HCT116 (cell line): ENCODE measurements at regions of chr9 and their contacts with region 1.

Region 1: DNA sequence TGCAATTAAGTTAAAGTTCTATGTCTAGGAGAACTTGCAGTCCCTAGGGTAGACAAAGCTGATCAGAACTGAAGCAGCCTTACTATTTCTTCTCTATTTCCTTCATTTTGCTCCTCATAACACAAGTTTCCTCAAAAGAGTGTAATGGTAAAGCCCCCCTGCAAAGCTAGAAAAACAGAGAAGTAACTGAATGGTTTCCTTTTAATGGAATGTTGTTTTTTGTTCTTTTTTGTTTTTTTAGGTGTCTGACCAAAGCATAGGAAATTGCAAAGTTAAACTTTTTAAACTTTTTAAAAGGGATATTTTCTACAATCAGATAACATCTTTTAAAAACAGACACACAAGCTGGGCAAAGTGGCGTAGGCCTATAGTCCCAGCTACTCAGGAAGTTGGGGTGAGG is 145.7 kb downstream of the TLE1 start:
- DNase-seq: no peak
- ATAC-seq: no peak
- H3K4me3 ChIP-seq: no peak overlapping the region
- H3K27ac ChIP-seq: no peak overlapping the region
- H3K4me1 ChIP-seq: no peaks in the 10 kb centered on the region
- H3K27me3 ChIP-seq: no peaks in the 10 kb centered on the region
- CTCF ChIP-seq: no peak
- POLR2A ChIP-seq: no peak
- RAD21 ChIP-seq: no peak

Region 2: DNA sequence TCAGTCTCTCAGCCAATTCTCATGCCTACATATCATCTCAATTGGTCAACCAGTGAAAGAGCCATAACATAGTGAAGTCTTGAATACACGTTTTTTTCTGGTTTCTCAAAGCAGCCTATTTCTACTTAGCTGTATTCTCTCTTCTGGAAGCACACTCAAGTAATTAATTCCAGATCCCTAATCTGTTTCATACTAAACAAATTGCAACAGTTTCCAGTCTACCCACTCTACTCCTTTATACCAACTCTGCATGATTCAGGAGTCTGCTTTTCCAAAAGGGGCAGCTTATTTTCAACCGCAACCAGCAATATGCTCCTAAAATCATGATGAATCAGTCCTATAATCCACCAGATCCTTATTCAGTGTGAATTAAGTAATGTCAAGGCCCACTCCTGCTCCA is 66.0 kb before region 1 on chr9:
- CTCF ChIA-PET with region 1: no interaction called
- POLR2A ChIA-PET with region 1: no interaction called
- RAD21 ChIA-PET with region 1: no interaction called
- intact Hi-C with region 1: no loop called
- DNase-seq: no peak
- ATAC-seq: no peak
- H3K4me3 ChIP-seq: no peak overlapping the region
- H3K27ac ChIP-seq: no peak overlapping the region
- H3K4me1 ChIP-seq: no peaks in the 10 kb centered on the region
- H3K27me3 ChIP-seq: no peaks in the 10 kb centered on the region
- CTCF ChIP-seq: no peak
- POLR2A ChIP-seq: no peak
- RAD21 ChIP-seq: no peak

Region 3: GRCh38 chr9:81592887-81593266 is 49.2 kb after region 1 on chr9:
- CTCF ChIA-PET with region 1: no interaction called
- POLR2A ChIA-PET with region 1: no interaction called
- RAD21 ChIA-PET with region 1: no interaction called
- intact Hi-C with region 1: no loop called
- DNase-seq: no peak
- ATAC-seq: no peak
- H3K4me3 ChIP-seq: no peak overlapping the region
- H3K27ac ChIP-seq: no peak overlapping the region
- H3K4me1 ChIP-seq: no peaks in the 10 kb centered on the region
- H3K27me3 ChIP-seq: no peaks in the 10 kb centered on the region
- CTCF ChIP-seq: no peak
- POLR2A ChIP-seq: no peak
- RAD21 ChIP-seq: no peak

Region 4: DNA sequence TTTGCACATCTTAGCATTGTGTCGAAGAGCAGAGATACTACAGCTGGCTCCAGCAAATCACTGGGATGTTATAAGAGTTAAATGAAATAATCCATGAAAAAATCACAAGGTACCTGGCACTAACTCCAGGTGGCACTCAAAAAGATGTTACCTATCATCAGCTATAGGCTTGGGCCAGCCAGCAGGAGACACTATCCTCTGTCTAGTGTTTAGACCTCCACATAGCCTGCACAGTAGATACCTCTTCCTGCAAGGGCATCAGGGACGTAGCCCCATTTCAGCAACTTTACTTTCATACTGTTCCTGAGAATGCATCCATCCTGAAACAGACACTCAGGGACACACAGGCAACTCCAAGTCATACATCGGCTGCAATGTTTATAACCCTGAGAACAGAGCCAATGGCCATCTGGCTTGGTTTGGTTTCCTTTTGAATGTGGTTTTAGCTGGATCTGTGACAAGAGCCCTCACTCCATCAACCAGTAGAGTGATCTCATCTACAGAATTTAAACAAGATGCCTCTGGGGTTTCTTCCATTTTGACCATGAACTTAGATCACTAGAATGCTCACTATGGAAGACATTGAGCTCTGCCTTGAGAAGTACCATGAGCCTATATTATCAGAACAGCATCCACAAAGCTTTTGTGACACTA is 75.8 kb after region 1 on chr9:
- CTCF ChIA-PET with region 1: no interaction called
- POLR2A ChIA-PET with region 1: no interaction called
- RAD21 ChIA-PET with region 1: no interaction called
- intact Hi-C with region 1: loop called (anchors 2 kb)
- DNase-seq: no peak
- ATAC-seq: no peak
- H3K4me3 ChIP-seq: no peak overlapping the region
- H3K27ac ChIP-seq: no peak overlapping the region
- H3K4me1 ChIP-seq: no peaks in the 10 kb centered on the region
- H3K27me3 ChIP-seq: no peaks in the 10 kb centered on the region
- CTCF ChIP-seq: 0 out of 6 replicates have a peak, but pooled peaks of 1 of the 3 experiments have one; percentile 13
- POLR2A ChIP-seq: no peak
- RAD21 ChIP-seq: no peak